Body of pancreas (tissue), 4 donors: ENCODE measurements at regions of chr16 and their contacts with region 1.

Region 1: DNA sequence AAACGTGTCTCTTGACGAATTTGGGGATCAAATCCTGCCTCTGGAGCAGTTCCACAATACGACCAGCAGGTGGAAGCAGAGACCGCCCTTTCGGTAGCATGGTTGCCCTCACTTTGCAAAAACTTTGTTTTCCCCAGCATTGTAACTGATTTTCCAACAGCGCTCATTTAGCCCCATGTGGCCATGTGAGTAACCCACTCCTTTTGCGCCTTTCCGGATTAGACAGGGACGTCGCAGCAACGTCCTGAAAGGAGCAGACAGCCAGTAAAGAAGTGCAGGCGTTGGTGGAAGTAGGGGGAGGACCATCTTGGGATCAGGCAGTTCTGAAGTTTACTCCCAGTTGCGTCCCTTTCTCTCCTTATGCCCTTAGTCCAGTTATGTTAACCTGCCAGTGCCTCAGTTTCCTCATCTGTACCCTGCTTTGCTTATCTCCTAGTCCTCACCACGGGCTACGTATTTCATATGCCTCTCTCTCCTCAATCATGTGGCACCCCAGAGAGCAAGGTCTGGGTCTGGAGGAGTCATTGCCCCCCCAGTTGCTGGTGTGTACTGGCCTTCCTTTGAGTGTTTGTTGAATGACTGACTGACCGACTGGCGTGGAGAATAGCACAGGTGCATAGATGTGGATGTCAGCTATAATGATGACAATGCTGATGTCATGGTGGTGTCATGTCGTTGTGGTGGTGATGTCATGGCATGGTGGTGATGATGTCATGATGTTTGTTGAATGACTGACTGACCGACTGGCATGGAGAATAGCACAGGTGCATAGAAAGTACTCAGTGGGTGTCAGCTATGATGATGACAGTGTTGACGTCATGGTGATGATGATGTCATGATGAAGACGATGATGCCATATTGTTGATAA is 22.3 kb downstream of the TMEM114 start:
- DNase-seq: peak; percentile 79 to 86 (median 80)
- ATAC-seq: peak; percentile 93
- H3K4me3 ChIP-seq: no peak overlapping the region
- H3K27ac ChIP-seq: no peak overlapping the region
- H3K4me1 ChIP-seq: peaks cover 7% of the 10 kb centered on the region
- H3K27me3 ChIP-seq: no peaks in the 10 kb centered on the region
- CTCF ChIP-seq: peak; percentile 97 to 100 (median 98)
- POLR2A ChIP-seq: no peak

Region 2: GRCh38 chr16:8885674-8886592 is 317.9 kb after region 1 on chr16:
- intact Hi-C with region 1: loop called (anchors 10 kb)
- DNase-seq: peak in 2 of 4 donors; percentile 44 to 45
- ATAC-seq: peak; percentile 36
- H3K4me3 ChIP-seq: no peak overlapping the region
- H3K27ac ChIP-seq: no peak overlapping the region
- H3K4me1 ChIP-seq: peaks cover 14% of the 10 kb centered on the region
- H3K27me3 ChIP-seq: no peaks in the 10 kb centered on the region
- CTCF ChIP-seq: peak in 1 of 7 experiments; percentile 3
- POLR2A ChIP-seq: no peak